ENCODE measurements at regions of chr17 and their contacts with region 1.

Region 1: GRCh38 chr17:67993596-67994361 is 2.5 kb downstream of the C17orf58 start:
- DNase-seq: peak in 1 of 2 experiments; percentile 86
- H3K4me3 ChIP-seq: peak overlapping the region; percentile 63
- H3K27ac ChIP-seq: peak overlapping the region; percentile 78
- H3K4me1 ChIP-seq: peaks cover 29% of the 10 kb centered on the region
- H3K27me3 ChIP-seq: no peaks in the 10 kb centered on the region
- CTCF ChIP-seq: no peak

Region 2: GRCh38 chr17:67970815-67971214 is 23.0 kb before region 1 on chr17:
- CTCF ChIA-PET with region 1: no interaction called
- POLR2A ChIA-PET with region 1: no interaction called
- intact Hi-C with region 1: no loop called
- DNase-seq: no peak
- H3K4me3 ChIP-seq: no peak overlapping the region
- H3K27ac ChIP-seq: no peak overlapping the region
- H3K4me1 ChIP-seq: no peaks in the 10 kb centered on the region
- H3K27me3 ChIP-seq: no peaks in the 10 kb centered on the region
- CTCF ChIP-seq: no peak

Region 3: DNA sequence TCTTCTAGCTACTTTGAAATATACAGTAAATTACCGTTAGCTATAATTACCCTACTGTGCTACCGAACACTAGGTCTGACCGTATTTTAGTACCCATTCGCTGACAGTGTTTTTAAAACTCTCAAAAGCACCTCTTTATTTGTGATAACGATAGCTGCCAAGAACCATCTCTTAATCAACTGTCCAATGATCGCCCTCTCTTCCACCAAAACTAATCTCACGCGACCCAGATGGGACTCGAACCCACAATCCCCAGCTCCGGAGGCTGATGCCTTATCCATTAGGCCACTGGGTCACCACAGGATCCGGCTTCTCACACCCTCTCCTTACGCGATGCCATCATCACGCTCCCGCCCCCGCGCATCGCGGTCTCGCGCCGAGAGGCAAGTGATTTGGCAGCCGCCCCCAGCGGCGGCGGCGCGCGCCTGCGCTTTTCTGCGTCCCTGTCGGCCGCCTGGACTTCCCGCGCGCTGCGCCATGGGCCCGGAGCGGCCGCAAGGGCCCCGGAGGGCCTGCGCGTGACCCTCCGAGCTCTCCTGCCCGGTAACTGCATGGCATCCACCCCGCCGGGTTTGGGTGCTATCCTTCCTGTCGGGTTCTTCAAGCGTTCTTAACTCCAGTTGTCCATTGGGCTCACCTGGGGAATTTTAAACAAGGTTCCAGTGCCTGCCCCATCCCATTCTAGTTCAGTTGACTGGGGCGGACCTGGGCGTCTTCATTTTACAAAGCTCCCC is 26.1 kb after region 1 on chr17:
- CTCF ChIA-PET with region 1: no interaction called
- POLR2A ChIA-PET with region 1: no interaction called
- intact Hi-C with region 1: loop called (anchors 2 kb)
- DNase-seq: peak; percentile 90 to 98
- H3K4me3 ChIP-seq: peak overlapping the region; percentile 71
- H3K27ac ChIP-seq: 0 out of 2 replicates have a peak overlapping the region, but pooled peaks have one; percentile 14
- H3K4me1 ChIP-seq: peaks cover 13% of the 10 kb centered on the region
- H3K27me3 ChIP-seq: no peaks in the 10 kb centered on the region
- CTCF ChIP-seq: peak; percentile 47; the same call in 1 of the 2 replicates

Region 4: GRCh38 chr17:68035523-68036303 is 41.9 kb after region 1 on chr17 and contains the start of gene KPNA2:
- CTCF ChIA-PET with region 1: no interaction called
- POLR2A ChIA-PET with region 1: interaction called, 3 read pairs
- intact Hi-C with region 1: loop called (anchors 5 kb)
- DNase-seq: peak; percentile 92 to 93
- H3K4me3 ChIP-seq: peak within 1 kb of the TSS; percentile 78
- H3K27ac ChIP-seq: peak within 1 kb of the TSS; percentile 52
- H3K4me1 ChIP-seq: peaks cover 26% of the 10 kb centered on the region
- H3K27me3 ChIP-seq: no peaks in the 10 kb centered on the region
- CTCF ChIP-seq: no peak
- total RNA-seq, gene KPNA2: 175 and 201 TPM in 2 replicates

Region 5: GRCh38 chr17:68101075-68101992 is 107.6 kb after region 1 on chr17:
- CTCF ChIA-PET with region 1: no interaction called
- POLR2A ChIA-PET with region 1: no interaction called
- intact Hi-C with region 1: loop called (anchors 1 kb)
- DNase-seq: peak; percentile 83 to 94
- H3K4me3 ChIP-seq: peak overlapping the region; percentile 91
- H3K27ac ChIP-seq: no peak overlapping the region
- H3K4me1 ChIP-seq: peaks cover 15% of the 10 kb centered on the region
- H3K27me3 ChIP-seq: no peaks in the 10 kb centered on the region
- CTCF ChIP-seq: no peak

Region 6: GRCh38 chr17:68600067-68600930 is 606.5 kb after region 1 on chr17:
- CTCF ChIA-PET with region 1: no interaction called
- POLR2A ChIA-PET with region 1: no interaction called
- intact Hi-C with region 1: no loop called
- DNase-seq: no peak
- H3K4me3 ChIP-seq: no peak overlapping the region
- H3K27ac ChIP-seq: no peak overlapping the region
- H3K4me1 ChIP-seq: no peaks in the 10 kb centered on the region
- H3K27me3 ChIP-seq: peaks cover 17% of the 10 kb centered on the region; the same call in 1 of the 2 replicates
- CTCF ChIP-seq: no peak

Region 7: DNA sequence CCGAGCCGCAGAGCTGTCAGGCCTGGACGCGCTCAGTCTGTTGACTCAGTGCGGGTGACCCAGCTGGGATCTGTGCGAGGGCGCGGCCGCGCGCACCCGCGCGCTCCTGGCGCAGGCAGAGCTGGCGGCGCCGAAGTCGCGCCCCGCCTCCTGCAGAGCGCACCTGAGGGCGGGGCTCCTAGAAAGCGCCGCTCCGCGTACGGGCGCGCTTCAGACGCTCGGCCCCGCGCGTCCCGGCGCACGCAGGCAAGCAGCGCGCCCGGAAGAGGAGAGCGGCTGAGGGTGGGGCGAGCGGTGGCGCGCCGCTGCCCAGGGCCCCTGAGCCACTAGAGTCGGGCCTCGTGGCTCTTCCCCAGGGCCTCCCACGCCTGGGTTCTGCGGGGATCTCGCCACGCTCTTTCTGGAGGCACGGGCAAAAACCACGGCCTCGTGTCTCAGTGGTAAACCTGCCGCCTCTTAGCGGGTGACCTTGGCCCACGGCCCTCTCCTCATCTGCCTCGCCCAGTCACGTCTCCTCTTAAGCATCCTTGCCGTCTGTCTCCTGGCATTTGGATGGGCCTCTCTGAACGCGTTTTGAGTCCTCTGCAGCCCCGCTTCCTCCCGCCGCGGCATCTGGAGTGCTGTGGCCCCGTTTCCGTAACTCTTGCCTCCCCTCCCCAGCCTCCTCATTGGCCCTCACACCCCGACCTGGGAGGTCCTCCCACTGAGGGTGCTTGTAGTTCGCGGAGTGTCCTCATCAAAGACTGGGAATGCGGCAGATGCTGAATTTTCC is 1333.5 kb after region 1 on chr17 and contains the start of gene ABCA5:
- CTCF ChIA-PET with region 1: no interaction called
- POLR2A ChIA-PET with region 1: no interaction called
- intact Hi-C with region 1: loop called (anchors 2 kb)
- DNase-seq: peak; percentile 83 to 91
- H3K4me3 ChIP-seq: peak within 1 kb of the TSS; percentile 81
- H3K27ac ChIP-seq: no peak within 1 kb of the TSS
- H3K4me1 ChIP-seq: peaks cover 16% of the 10 kb centered on the region
- H3K27me3 ChIP-seq: no peaks in the 10 kb centered on the region
- CTCF ChIP-seq: no peak
- total RNA-seq, gene ABCA5: 2.9 and 3.8 TPM in 2 replicates

Measured in PC-9 (cell line).